Mammary epithelial cell (primary cell): ENCODE measurements at regions of chr16 and their contacts with region 1.

Region 1: GRCh38 chr16:74709441-74709877 is 8.8 kb upstream of the MLKL start:
- DNase-seq: peak; percentile 73
- H3K4me3 ChIP-seq: no peak overlapping the region
- H3K27ac ChIP-seq: no peak overlapping the region
- H3K4me1 ChIP-seq: no peaks in the 10 kb centered on the region
- H3K27me3 ChIP-seq: no peaks in the 10 kb centered on the region
- CTCF ChIP-seq: peak; percentile 97 to 98

Region 2: GRCh38 chr16:74657870-74658642 is 51.4 kb before region 1 on chr16:
- CTCF ChIA-PET with region 1: no interaction called
- dilution Hi-C with region 1: no loop called
- in situ Hi-C with region 1: no loop called
- intact Hi-C with region 1: no loop called
- DNase-seq: peak; percentile 4
- H3K4me3 ChIP-seq: no peak overlapping the region
- H3K27ac ChIP-seq: no peak overlapping the region
- H3K4me1 ChIP-seq: peaks cover 21% of the 10 kb centered on the region
- H3K27me3 ChIP-seq: no peaks in the 10 kb centered on the region
- CTCF ChIP-seq: no peak

Region 3: GRCh38 chr16:74724820-74725549 is 15.5 kb after region 1 on chr16:
- CTCF ChIA-PET with region 1: interaction called, 3 read pairs
- dilution Hi-C with region 1: no loop called
- in situ Hi-C with region 1: no loop called
- intact Hi-C with region 1: loop called (anchors 2 kb)
- DNase-seq: peak; percentile 87
- H3K4me3 ChIP-seq: no peak overlapping the region
- H3K27ac ChIP-seq: peak overlapping the region; percentile 23
- H3K4me1 ChIP-seq: peaks cover 27% of the 10 kb centered on the region
- H3K27me3 ChIP-seq: no peaks in the 10 kb centered on the region
- CTCF ChIP-seq: peak; percentile 61 to 69

Region 4: GRCh38 chr16:74862741-74863244 is 153.3 kb after region 1 on chr16:
- CTCF ChIA-PET with region 1: interaction called, 3 read pairs
- dilution Hi-C with region 1: no loop called
- in situ Hi-C with region 1: loop called (anchors 5 to 10 kb)
- intact Hi-C with region 1: loop called (anchors 1 kb)
- DNase-seq: peak; percentile 49
- H3K4me3 ChIP-seq: no peak overlapping the region
- H3K27ac ChIP-seq: no peak overlapping the region
- H3K4me1 ChIP-seq: peaks cover 6% of the 10 kb centered on the region
- H3K27me3 ChIP-seq: no peaks in the 10 kb centered on the region
- CTCF ChIP-seq: peak; percentile 78 to 88

Region 5: DNA sequence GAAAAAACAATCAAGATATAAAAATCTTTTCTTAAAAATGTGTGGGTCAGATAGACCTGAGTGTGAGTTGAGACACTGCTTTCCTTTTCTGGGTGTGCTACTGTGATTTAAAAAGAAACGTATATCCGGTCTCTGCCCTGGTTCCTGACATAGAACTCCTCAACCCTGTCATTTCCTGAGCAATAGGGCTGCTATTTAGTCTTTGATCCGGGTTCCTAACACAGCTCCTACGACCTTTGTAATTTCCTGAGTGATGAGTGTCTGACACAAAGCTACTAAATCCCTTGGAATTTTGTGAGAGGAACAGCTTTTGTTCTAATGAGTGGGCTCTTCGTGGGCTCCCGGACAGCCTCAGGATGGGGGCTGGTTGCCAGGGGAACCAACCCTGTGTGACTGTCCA is 159.0 kb after region 1 on chr16:
- CTCF ChIA-PET with region 1: no interaction called
- dilution Hi-C with region 1: no loop called
- in situ Hi-C with region 1: loop called in 1 of 2 experiments (anchors 5 kb)
- intact Hi-C with region 1: no loop called
- DNase-seq: peak; percentile 60
- H3K4me3 ChIP-seq: peak overlapping the region; percentile 33 to 54 (median 53)
- H3K27ac ChIP-seq: peak overlapping the region; percentile 58
- H3K4me1 ChIP-seq: peaks cover 17% of the 10 kb centered on the region
- H3K27me3 ChIP-seq: no peaks in the 10 kb centered on the region
- CTCF ChIP-seq: no peak

Region 6: DNA sequence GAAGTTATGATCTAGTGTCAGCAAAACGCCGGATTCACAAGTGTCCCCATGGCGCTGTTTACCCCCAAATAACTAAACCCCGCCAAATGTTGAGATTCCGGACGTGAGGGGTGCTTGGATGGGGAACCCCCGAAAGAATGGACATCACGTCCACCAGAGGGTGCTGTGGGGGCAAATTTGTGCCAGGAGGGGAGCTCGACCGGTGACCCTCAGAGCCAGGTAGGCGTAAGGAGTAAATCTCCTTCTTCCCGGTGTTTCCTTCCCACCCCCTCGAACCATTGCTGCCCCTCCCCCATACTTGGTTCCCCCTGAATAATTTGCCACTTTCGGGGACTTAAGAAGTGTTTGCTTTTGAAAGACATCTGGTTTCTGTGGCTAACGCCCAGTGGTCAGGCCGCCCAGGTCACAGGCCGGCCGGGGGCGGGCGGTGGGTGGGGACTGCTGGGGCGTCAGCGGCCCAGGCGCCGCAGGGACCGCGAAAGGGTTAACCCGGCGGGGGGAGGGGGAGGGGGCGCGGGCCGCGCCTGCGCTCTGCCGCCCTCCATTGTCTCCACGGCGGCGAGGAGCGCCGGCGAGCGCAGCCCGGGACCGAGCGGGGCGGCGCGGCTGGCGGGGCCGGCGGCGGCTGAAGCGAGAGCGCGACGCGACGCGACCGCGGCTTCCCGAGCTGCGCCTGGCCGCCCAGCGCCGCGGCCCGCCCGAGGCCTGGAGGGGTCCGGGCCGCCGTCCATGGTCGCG is 289.2 kb after region 1 on chr16 and contains the start of gene ZNRF1:
- CTCF ChIA-PET with region 1: no interaction called
- dilution Hi-C with region 1: no loop called
- in situ Hi-C with region 1: no loop called
- intact Hi-C with region 1: loop called (anchors 10 kb)
- DNase-seq: peak; percentile 78
- H3K4me3 ChIP-seq: peak within 1 kb of the TSS; percentile 52 to 77 (median 64)
- H3K27ac ChIP-seq: peak within 1 kb of the TSS; percentile 56
- H3K4me1 ChIP-seq: peaks cover 18% of the 10 kb centered on the region
- H3K27me3 ChIP-seq: no peaks in the 10 kb centered on the region
- CTCF ChIP-seq: peak; percentile 47 to 77
- total RNA-seq, gene ZNRF1: 12.8 to 32.0 TPM

Region 7: DNA sequence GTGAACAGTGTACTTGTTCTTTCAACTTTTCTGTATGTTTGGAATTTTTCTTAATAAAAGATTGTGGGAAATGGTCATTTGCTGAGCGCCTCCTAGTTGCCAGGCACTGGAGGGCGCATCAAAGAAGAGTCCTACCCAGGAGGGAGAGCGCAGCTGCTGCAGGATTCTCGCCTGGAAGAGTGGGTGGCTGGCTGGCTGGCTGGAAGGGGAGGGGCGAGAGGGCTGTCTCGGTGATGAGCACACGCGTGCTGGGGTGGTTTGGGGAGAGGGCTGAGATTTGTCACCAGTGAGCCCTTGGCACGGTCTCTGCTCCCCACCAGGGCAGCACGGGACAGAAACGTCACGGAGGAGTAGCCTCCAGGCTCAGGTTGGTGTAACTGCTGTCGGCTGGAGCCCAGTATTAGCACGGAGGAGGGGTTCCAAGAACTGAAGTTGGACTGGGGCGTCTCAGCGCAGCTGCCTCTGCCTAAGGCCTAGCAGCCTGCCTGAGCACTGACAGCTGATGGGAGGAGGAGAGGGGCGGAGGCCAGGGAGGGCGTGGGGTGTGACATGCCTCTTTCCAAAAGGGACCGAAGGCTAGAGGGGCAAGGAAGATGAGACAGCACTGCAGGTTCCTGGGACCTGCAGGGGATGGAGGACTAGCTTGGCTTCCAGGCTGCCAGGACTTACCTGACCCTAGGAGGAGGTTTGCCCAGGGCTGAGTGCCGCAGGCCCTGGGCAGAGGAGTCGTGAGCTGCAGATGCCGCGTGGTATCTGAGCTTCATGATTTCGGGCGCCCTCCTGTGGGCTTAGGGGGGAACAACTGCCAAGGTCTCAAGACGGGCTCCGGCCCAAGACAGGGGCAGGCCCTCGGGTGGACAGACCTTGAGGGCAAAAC is 401.4 kb after region 1 on chr16:
- CTCF ChIA-PET with region 1: no interaction called
- dilution Hi-C with region 1: no loop called
- in situ Hi-C with region 1: loop called in 1 of 2 experiments (anchors 25 kb)
- intact Hi-C with region 1: loop called (anchors 1 kb)
- DNase-seq: peak; percentile 80
- H3K4me3 ChIP-seq: peak overlapping the region in 2 of 3 experiments; percentile 28 to 42
- H3K27ac ChIP-seq: peak overlapping the region; percentile 57
- H3K4me1 ChIP-seq: peaks cover 42% of the 10 kb centered on the region
- H3K27me3 ChIP-seq: no peaks in the 10 kb centered on the region
- CTCF ChIP-seq: peak; percentile 85 to 94